GM18951 (cell line): ENCODE measurements at regions of chr17 and their contacts with region 1.

Region 1: GRCh38 chr17:44199553-44200477 is at the start of gene ATXN7L3:
- POLR2A ChIP-seq: peak; percentile 20

Region 2: DNA sequence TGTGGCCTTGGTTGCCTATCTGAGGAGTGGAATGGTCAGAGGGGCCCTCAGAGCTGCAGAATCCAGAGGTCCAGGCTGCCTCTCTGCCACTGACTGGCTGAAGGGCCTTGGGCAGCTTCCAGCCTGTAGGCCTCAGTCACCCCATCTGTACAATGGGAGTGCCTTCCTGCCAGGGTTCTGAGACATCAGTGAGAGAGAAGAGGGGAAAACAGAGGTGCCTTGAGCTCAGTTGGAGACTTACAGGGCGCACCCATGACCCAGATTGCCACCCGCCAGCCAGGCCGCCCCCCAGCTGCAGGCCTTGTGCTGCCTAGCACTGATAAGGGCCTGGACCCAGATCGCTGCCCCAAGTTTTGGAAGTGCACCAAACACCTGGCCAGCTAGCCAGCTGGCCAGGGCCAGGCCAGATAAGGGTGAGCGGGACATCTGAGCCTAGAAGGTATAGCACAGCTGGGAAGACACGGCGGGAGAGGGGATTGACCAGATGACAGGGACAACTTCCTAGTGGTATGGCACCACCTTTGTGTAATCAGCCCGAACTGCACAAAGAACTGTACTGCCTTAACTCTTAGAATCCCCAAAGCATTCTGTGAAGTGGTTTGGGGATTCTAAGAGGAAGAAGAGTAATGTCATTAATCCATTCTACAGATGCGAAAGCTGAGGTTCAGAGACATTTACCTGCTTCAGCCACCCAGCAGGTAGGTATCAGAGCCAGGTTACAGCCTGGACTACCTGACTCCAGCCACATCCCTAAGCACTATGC is 66.8 kb after region 1 on chr17:
- in situ Hi-C with region 1: no loop called
- POLR2A ChIP-seq: no peak

Region 3: DNA sequence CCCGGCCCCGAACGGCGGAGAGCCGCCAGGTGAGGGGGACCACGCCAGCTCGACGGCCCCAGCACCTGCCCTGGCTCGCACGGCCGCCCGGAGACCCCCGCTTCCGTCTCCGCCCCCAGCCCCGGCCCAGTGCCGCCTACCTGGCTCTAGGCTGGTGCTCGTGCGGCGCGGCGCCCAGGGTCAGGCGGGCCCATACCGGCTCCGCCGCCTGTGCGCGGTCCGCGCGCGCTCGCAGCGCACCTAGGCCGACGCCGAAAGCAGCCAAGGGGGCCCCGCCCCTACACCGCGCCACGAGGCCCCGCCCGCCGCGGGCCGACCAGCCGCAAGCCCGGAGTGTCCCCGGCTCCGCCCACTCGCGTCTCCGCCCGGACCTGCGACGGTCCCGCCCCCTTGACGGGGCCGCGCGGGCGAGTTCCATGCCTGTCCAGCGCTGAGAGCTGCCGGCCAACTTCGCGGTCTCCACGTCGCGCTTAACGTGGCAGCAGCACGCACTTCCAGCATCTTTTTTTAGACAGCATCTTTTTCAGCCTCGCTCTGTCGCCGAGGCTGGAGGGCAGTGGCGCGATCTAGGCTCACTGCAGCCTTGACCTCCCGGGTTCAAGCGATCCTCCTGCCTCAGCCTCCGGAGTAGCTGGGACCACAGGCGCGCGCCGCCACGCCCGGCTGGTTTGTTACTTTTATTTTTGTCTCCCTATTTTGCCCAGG is 124.9 kb after region 1 on chr17 and contains the start of gene SLC25A39:
- in situ Hi-C with region 1: loop called (anchors 5 kb)
- POLR2A ChIP-seq: peak; percentile 93

Region 4: DNA sequence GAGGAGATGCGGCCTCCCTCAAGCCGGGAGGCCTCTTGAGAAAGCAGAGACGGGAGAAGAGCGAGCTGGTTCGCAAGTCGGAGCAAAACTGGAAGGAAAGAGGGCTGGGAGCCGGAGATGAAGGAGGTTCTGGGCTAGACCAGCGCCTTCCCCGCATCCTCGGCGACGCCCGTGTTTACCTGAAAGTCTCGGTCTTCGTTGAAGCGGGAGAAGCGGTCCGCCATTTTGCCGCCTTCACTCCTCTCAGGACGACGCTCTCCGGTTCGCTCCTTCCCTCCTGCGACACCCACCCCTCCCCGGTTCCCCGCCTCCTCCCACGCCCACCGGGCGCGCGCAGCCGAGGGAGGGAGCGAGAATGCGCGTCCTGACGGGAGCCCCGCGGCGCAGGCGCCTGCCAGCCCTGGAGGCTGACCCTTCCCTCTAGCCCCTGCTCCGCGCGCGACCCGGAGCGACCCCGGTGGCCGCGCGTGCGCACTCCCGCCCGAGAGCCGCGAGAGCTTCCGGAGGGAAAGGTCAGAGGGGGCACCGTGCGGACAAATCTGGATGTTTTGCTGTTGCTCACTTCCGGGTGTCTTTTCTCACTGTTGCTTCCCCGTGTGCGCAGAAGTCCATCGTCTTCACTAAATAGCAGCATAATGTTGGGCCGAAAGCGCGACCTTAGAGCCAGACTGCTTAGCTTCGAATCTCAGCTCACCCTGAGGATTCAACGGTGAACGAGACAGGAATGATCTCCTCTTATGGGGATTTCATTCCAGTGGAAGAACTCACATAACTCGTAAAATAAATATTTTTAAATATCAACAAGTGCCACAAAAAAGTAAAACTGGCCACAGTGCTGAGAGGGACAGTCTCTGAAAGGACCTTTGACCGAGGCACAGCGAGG is 303.6 kb after region 1 on chr17 and contains the start of gene GPATCH8:
- in situ Hi-C with region 1: loop called (anchors 25 kb)
- POLR2A ChIP-seq: peak; percentile 74